IMR-90 (cell line): ENCODE measurements at regions of chr1 and their contacts with region 1.

Region 1: DNA sequence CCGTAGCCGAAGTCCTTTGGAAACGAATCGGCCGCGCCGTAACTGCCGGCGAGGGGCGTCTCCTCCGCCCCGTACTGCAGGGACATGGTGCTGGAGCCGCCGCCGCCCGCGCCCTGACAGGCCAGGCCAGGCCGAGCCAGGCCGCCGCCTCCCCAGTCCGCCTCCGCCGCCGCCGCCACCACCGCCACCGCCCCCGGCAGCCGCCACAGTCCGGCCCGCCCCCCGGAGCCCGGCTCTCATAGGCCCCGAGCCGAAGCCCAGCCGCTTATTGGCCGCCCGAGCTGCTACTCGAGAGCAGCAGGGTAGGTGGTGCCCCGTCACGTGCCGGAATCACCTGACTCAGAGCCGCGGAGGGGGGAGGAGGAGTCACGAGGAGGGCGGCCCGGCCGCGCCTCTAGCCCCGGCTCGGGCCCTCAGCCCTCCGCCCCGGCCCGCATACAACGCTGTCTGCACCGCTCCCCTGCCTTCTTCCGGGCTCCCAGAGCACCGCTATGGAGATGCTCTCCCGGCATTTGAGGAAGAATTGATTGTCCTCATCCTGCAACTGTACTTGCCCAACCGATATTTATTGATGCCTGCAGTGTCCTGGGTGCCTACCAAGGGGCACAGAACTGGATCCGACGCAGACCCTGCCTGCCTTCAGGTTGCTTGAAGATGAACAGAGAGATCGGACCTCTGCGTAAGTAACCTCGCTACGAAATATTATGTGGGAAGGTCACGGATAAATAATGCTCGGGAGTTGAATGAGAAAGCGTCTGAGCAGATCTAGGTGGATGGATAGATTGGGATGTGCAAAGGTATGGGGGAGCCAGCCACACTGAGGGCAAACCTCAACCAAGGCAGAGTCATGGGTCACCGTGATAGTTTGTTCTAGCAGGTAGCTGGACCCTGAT is at the start of gene RRAGC:
- DNase-seq: peak; percentile 97
- ATAC-seq: peak; percentile 98
- H3K4me3 ChIP-seq: peak within 1 kb of the TSS; percentile 92
- H3K27ac ChIP-seq: peak within 1 kb of the TSS; percentile 80
- H3K4me1 ChIP-seq: peaks cover 2% of the 10 kb centered on the region; the same call in 1 of the 2 replicates
- H3K27me3 ChIP-seq: no peaks in the 10 kb centered on the region
- CTCF ChIP-seq: no peak
- POLR2A ChIP-seq: peak; percentile 64
- RAD21 ChIP-seq: no peak
- total RNA-seq, gene RRAGC: 7.2 and 11.7 TPM in 2 replicates

Region 2: DNA sequence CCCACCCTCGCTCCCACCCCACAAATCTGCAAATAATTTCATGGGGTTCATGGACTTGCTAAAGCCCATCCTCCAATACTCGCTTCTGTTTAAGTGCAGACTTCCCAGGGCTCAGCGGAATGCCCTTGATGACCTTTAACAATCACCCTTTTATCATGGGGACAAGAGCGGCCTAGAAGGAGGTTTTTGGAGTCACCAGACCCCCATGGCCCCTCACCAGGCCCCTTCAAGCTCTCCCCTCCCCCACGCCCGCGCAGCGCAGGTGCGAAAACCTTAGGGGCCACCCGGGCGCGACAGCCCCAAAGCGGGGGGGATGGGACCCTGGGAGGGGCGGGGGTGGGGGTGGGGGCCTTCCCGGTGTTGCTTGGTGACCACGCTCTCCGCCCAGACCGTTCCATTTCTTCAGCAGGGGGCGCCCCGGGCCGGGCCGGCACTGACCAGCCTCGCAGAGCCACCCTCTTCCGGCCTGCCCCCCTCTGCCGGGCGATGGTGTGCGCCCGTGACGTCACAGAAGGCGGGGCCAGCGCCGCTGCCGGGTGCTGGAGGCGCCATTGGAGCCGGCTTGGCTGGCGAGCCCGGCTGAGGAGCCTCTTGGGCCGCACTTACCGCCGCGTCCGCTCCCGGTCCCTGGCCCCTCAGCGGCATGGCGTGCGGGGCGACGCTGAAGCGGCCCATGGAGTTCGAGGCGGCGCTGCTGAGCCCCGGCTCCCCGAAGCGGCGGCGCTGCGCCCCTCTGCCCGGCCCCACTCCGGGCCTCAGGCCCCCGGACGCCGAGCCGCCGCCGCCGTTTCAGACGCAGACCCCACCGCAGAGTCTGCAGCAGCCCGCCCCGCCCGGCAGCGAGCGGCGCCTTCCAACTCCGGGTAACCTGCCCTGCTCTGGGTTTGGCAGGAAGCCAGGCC is 131.2 kb after region 1 on chr1 and contains the start of gene AKIRIN1:
- CTCF ChIA-PET with region 1: no interaction called
- POLR2A ChIA-PET with region 1: no interaction called
- dilution Hi-C with region 1: no loop called
- in situ Hi-C with region 1: no loop called
- intact Hi-C with region 1: loop called (anchors 2 kb)
- DNase-seq: peak; percentile 95
- ATAC-seq: peak; percentile 94
- H3K4me3 ChIP-seq: peak within 1 kb of the TSS; percentile 85
- H3K27ac ChIP-seq: peak within 1 kb of the TSS; percentile 93
- H3K4me1 ChIP-seq: peaks cover 11% of the 10 kb centered on the region
- H3K27me3 ChIP-seq: no peaks in the 10 kb centered on the region
- CTCF ChIP-seq: no peak
- POLR2A ChIP-seq: peak; percentile 98
- RAD21 ChIP-seq: no peak
- total RNA-seq, gene AKIRIN1: 42.5 and 63.9 TPM in 2 replicates

Region 3: DNA sequence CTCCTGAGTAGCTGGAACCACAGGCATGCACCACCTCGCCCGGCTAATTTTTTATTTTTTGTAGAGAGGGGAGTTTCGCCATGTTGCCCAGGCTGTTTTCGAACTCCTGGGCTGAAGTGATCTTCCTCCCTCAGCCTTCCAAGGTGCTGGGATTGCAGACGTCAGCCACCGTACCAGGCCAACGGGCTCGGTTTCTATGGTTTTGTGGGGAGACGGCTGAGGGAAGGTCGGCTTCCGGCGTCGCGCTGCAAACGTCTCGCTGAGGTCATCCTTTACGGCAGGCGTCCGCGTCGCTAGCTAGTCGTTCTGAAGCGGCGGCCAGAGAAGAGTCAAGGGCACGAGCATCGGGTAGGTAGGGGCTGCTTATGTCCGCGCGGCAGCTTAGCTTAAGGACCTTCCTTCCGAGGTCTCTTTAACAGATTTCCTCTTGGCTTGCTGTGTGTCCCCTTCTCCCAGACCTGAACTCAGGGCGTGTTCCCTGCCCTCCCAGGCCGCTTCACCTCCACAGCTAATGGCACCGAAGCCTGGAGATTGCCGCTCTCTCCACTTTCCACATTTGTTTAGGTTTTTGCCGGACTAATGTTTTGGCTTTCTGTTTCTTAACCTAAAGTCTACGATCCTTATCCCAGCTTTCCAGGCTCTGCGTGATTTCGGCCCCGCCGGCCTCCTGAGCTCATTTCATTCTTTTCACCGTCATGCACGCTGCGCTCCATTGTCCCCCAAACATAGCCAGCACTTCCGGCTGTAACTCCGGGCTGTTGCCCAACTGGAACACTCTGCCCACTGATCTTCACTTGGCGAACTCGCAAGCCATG is 166.5 kb after region 1 on chr1 and contains the start of gene NDUFS5:
- CTCF ChIA-PET with region 1: no interaction called
- POLR2A ChIA-PET with region 1: no interaction called
- dilution Hi-C with region 1: no loop called
- in situ Hi-C with region 1: no loop called
- intact Hi-C with region 1: loop called (anchors 1 kb)
- DNase-seq: peak; percentile 95
- ATAC-seq: peak; percentile 93
- H3K4me3 ChIP-seq: peak within 1 kb of the TSS; percentile 75
- H3K27ac ChIP-seq: peak within 1 kb of the TSS; percentile 93
- H3K4me1 ChIP-seq: peaks cover 3% of the 10 kb centered on the region
- H3K27me3 ChIP-seq: no peaks in the 10 kb centered on the region
- CTCF ChIP-seq: no peak
- POLR2A ChIP-seq: peak; percentile 98
- RAD21 ChIP-seq: 0 out of 2 replicates have a peak, but pooled peaks have one; percentile 16
- total RNA-seq, gene NDUFS5: 645 and 1,415 TPM in 2 replicates

Region 4: DNA sequence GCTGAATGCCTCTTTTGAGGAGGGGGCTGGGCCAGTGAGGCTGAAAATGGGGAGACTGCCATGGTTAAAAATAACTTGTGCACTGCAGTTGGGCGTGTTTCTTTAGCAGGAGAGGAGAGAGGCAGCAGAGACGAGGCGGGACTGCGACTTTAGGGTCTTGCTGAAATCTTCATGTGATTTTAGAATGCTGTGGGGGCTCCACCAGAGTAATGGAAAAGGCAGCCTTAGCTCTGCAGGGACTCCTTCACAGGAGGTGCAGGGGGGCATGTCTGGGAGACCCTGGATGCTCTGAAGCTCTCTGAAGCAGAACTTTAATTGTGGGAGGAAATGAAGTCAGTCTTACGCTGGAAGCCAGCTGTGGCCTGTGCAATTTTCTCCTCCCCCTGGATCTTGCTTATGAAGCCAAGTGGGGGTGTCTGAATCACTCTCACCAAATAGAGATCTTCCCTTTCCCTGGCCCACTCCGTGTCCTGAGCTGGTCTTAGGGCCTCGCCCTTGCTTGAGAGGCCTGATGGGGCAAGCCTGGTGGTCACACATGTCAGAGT is 227.1 kb after region 1 on chr1:
- CTCF ChIA-PET with region 1: no interaction called
- POLR2A ChIA-PET with region 1: no interaction called
- dilution Hi-C with region 1: no loop called
- in situ Hi-C with region 1: loop called (anchors 5 kb)
- intact Hi-C with region 1: no loop called
- DNase-seq: peak; percentile 76
- ATAC-seq: peak; percentile 36
- H3K4me3 ChIP-seq: no peak overlapping the region
- H3K27ac ChIP-seq: peak overlapping the region; percentile 20; the same call in 1 of the 2 replicates
- H3K4me1 ChIP-seq: peaks cover 13% of the 10 kb centered on the region
- H3K27me3 ChIP-seq: peaks cover 23% of the 10 kb centered on the region
- CTCF ChIP-seq: no peak
- POLR2A ChIP-seq: no peak
- RAD21 ChIP-seq: no peak

Region 5: DNA sequence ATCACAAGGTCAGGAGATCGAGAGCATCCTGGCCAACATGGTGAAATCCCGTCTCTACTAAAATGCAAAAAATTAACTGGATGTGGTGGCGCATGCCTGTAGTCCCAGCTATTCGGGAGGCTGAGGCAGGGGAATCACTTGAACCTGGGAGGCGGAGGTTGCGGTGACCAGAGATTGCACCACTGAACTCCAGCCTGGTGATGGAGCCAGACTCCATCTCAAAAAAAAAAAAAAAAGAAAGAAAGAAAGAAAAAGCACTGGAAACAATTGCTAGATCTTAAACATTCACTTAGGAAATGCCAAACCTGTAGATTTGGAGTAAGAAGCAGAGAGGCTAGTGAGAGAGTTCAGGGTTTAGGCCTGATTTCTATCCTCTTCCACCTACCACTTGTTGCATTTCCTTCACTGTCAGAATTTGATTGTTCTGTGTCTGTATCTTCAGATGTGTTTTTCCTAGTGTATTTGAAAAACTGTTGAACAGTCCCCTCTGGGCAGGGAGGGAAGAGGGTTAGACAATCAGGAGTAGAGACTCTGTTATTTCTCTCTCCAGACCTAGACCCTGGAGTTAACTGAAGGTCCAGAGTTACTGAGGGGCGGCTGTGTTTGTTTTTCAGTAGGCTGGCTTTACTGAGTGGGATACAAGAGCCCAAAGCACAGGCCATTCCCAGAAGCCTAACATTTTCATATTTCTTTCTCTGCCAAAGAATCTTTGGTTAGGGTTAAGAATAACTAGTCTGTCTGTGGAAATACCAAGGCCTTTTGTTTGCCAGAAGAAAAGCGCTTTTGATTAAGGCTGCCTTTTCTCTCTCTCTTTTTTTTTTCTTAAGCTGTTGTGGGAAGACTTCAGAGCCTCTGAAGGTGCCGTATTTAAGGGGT is 313.6 kb after region 1 on chr1:
- CTCF ChIA-PET with region 1: no interaction called
- POLR2A ChIA-PET with region 1: interaction called, 10 read pairs
- dilution Hi-C with region 1: no loop called
- in situ Hi-C with region 1: no loop called
- intact Hi-C with region 1: no loop called
- DNase-seq: no peak
- ATAC-seq: no peak; the same call in 1 of the 2 replicates
- H3K4me3 ChIP-seq: no peak overlapping the region
- H3K27ac ChIP-seq: peak overlapping the region; percentile 85; the same call in 1 of the 2 replicates
- H3K4me1 ChIP-seq: peaks cover 28% of the 10 kb centered on the region
- H3K27me3 ChIP-seq: no peaks in the 10 kb centered on the region
- CTCF ChIP-seq: peak; percentile 24
- POLR2A ChIP-seq: no peak
- RAD21 ChIP-seq: peak; percentile 23; the same call in 1 of the 2 replicates